A549 (cell line): ENCODE measurements at regions of chr17 and their contacts with region 1.

Region 1: DNA sequence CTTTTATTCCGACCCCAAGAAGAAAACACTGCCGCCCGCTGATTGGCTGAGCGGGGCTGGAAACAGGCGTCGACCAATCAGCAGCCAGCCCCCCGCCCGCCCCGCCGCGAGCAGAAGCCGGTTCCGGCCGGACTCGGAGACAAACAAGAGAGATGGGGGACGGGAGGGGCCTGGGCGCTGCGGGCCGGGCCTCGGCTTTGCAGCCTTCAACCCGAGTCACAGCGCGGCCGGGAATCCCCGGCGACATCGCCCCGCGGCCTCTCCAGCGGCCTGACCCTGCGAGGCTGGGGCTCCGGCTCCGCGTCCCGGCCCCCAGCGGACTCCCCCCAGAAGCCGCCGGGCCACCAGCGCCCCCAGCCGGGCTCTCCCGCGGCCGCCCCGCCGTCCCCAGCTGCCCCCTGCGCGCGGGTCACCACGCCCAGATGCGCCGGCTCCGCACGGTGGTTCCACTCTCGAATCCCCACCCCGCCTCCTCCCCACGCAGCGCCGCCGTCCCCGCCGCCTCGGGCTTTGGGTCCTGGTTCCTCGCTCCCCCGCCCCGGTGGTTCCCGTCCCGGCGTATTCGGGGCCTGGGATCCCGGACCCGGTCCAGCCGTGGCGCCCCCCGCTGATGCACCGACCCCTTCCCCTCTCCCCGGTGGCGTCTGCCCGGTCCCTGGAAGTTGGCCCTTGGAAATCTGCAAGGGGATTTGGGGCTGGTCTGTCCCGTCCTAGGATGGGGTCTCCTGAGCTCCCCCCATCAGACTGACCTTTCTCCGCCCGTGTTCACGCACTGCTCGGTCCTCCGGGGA is 417 bp upstream of the SLC43A2 start:
- DNase-seq: peak; percentile 97 to 100
- ATAC-seq: peak; percentile 85 to 88
- H3K4me3 ChIP-seq: peak overlapping the region; percentile 71
- H3K27ac ChIP-seq: peak overlapping the region; percentile 80 to 88
- H3K4me1 ChIP-seq: 0 out of 3 replicates have a peak, but pooled peaks cover 4% of the 10 kb centered on the region
- CTCF ChIP-seq: peak; percentile 62
- EP300 ChIP-seq: no peak
- POLR2A ChIP-seq: peak; percentile 59
- RAD21 ChIP-seq: peak; percentile 38 to 84; a peak in 4 of 5 replicates

Region 2: DNA sequence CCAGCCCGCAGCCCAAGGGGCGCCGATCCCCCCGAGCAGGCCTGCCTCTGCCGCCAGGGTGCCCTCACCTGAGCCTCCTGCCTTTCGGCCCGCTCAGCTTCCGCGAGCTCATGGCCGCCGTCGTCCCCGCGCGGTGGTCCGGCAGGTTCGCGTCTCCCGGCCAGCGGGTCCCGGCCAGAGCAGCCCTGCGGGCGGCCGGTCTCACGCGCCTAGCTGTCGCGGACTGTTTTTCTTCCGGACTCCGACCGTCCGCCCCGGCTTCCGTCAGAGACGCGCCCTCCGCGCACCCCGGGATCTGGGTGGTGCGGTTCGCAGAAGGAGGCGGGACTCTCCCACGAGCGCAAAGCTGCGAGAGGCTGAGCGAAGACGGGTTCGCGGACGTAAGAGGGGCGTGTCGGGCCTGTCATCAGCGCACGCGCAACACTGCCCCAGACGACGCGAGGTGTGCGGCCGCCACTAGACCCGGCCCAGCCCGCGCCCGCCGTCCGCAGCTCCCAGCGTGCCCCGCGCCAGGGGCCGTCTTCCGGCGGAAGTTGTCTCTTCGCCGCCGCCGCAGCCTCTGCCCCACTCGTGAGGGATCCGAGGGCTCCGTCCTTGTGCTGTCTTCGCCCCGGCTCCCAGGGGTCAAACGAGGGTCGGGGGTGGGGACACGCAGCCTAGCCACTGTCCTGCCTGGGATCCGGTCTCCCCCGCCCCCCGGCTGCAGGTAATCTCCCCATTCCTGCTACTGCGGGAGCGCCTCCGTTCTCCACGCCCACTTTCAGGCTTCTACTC is 112.5 kb before region 1 on chr17 and contains the start of gene INPP5K:
- CTCF ChIA-PET with region 1: interaction called, 20 read pairs
- POLR2A ChIA-PET with region 1: interaction called, 17 read pairs
- DNase-seq: peak; percentile 99
- ATAC-seq: peak; percentile 90 to 95
- H3K4me3 ChIP-seq: peak within 1 kb of the TSS; percentile 76
- H3K27ac ChIP-seq: peak within 1 kb of the TSS; percentile 95
- H3K4me1 ChIP-seq: peaks cover 12% of the 10 kb centered on the region; the same call in 2 of the 3 replicates
- CTCF ChIP-seq: no peak
- EP300 ChIP-seq: no peak
- POLR2A ChIP-seq: peak; percentile 91
- RAD21 ChIP-seq: no peak; a peak in 1 of 5 replicates
- polyA plus RNA-seq, gene INPP5K: 30.8 and 41.8 TPM in 2 replicates

Region 3: DNA sequence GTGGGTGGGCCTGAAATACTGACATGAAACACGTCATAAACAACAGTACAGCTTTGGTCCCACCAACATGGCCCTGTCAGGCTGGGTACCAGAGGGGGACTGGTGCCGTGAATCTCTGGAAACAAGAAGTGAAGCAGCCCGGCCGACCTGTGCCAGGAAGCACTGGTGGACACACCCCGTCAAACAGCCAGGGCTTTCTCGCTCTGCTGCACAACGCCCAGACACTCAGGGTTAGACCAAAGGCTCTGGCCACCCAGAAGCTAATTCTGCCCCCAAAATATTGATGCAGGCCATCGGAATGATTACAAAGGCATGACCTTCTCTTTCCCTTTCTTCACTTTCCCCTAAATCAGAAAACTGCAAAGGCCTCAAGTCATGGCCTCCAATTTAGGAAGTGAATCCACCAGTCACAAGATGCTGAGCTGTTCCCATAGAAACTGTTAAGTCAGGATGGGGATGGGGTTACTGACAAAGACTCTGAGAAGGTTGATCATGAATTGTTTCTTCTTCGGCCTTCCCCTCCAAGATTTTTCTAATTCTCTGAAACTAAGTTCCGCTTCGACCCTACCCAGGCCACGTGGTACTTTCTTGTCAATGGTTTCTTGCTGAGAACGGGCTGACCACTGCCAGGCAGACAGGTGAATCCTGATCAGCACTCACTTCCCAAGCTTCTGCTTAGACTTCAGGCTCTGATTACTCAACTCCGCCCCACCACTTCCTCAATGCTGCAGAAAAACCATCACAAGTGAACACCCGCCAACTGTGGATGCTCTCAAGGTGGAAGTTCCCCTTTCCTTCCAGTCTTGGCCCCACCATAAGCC is 73.2 kb before region 1 on chr17:
- CTCF ChIA-PET with region 1: interaction called, 497 read pairs
- POLR2A ChIA-PET with region 1: no interaction called
- DNase-seq: no peak
- ATAC-seq: no peak
- H3K4me3 ChIP-seq: no peak overlapping the region
- H3K27ac ChIP-seq: no peak overlapping the region
- H3K4me1 ChIP-seq: peaks cover 5% of the 10 kb centered on the region; the same call in 2 of the 3 replicates
- CTCF ChIP-seq: no peak
- EP300 ChIP-seq: no peak
- POLR2A ChIP-seq: no peak
- RAD21 ChIP-seq: no peak

Region 4: GRCh38 chr17:1580979-1581678 is 47.9 kb before region 1 on chr17:
- CTCF ChIA-PET with region 1: interaction called, 497 read pairs
- POLR2A ChIA-PET with region 1: interaction called, 9 read pairs
- DNase-seq: no peak
- ATAC-seq: no peak
- H3K4me3 ChIP-seq: no peak overlapping the region
- H3K27ac ChIP-seq: no peak overlapping the region
- H3K4me1 ChIP-seq: peaks cover 16% of the 10 kb centered on the region
- CTCF ChIP-seq: no peak
- EP300 ChIP-seq: no peak
- POLR2A ChIP-seq: no peak
- RAD21 ChIP-seq: no peak

Region 5: DNA sequence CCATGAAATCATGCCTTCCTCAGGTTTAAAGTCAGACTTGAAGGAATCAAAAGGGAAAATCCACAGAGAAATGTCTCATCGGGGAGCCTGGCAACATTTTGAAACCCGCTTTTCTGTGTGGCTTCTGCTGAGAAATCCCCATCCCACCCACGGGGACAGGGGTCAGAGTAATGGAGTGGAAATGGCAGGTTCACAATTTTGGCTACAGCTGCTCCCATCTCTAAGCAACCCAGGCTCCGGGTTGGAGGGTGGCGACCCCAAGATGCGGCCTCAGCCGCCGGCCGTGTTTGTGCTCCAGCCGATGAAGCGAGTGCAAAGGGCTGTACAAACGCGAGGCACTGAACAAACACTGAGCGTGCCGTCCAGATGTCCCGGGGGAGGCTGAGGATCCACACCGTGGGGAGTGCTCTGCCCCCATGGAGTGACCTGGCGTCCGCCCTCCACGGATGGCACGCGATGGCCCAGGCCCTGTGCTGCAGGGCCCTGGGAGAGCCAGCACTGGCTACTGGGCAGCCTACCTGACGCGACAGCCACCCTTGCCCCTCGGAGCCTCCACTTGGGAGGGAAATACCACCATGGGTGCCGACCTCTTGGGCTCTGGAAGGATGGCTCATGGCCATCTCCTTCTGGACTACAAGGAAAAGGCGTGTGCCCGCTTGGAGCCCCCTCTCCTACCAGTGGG is 22.6 kb before region 1 on chr17:
- CTCF ChIA-PET with region 1: interaction called, 16 read pairs
- POLR2A ChIA-PET with region 1: interaction called, 3 read pairs
- DNase-seq: no peak
- ATAC-seq: peak in 1 of 2 experiments; percentile 28; a peak in 3 of 6 replicates
- H3K4me3 ChIP-seq: no peak overlapping the region
- H3K27ac ChIP-seq: no peak overlapping the region
- H3K4me1 ChIP-seq: no peaks in the 10 kb centered on the region
- CTCF ChIP-seq: no peak
- EP300 ChIP-seq: no peak
- POLR2A ChIP-seq: no peak
- RAD21 ChIP-seq: no peak

Region 6: GRCh38 chr17:1639549-1640343 is 10.7 kb after region 1 on chr17:
- CTCF ChIA-PET with region 1: interaction called, 115 read pairs
- POLR2A ChIA-PET with region 1: interaction called, 4 read pairs
- DNase-seq: peak in 1 of 2 experiments; percentile 60
- ATAC-seq: peak; percentile 19 to 39; a peak in 4 of 6 replicates
- H3K4me3 ChIP-seq: no peak overlapping the region
- H3K27ac ChIP-seq: no peak overlapping the region
- H3K4me1 ChIP-seq: peaks cover 22% of the 10 kb centered on the region
- CTCF ChIP-seq: no peak
- EP300 ChIP-seq: no peak
- POLR2A ChIP-seq: no peak
- RAD21 ChIP-seq: no peak

Region 7: GRCh38 chr17:1658100-1658499 is 29.0 kb after region 1 on chr17:
- CTCF ChIA-PET with region 1: interaction called, 17 read pairs
- POLR2A ChIA-PET with region 1: no interaction called
- DNase-seq: no peak
- ATAC-seq: no peak
- H3K4me3 ChIP-seq: no peak overlapping the region
- H3K27ac ChIP-seq: no peak overlapping the region
- H3K4me1 ChIP-seq: 0 out of 3 replicates have a peak, but pooled peaks cover 7% of the 10 kb centered on the region
- CTCF ChIP-seq: no peak
- EP300 ChIP-seq: no peak
- POLR2A ChIP-seq: no peak
- RAD21 ChIP-seq: no peak

Region 8: GRCh38 chr17:1810450-1811103 is 181.5 kb after region 1 on chr17:
- CTCF ChIA-PET with region 1: no interaction called
- POLR2A ChIA-PET with region 1: no interaction called
- DNase-seq: no peak
- ATAC-seq: no peak
- H3K4me3 ChIP-seq: no peak overlapping the region
- H3K27ac ChIP-seq: no peak overlapping the region
- H3K4me1 ChIP-seq: peaks cover 12% of the 10 kb centered on the region; the same call in 1 of the 3 replicates
- CTCF ChIP-seq: no peak
- EP300 ChIP-seq: no peak
- POLR2A ChIP-seq: no peak
- RAD21 ChIP-seq: no peak